CD4-positive, alpha-beta memory T cell (primary cell): ENCODE measurements at regions of chr3 and their contacts with region 1.

Region 1: DNA sequence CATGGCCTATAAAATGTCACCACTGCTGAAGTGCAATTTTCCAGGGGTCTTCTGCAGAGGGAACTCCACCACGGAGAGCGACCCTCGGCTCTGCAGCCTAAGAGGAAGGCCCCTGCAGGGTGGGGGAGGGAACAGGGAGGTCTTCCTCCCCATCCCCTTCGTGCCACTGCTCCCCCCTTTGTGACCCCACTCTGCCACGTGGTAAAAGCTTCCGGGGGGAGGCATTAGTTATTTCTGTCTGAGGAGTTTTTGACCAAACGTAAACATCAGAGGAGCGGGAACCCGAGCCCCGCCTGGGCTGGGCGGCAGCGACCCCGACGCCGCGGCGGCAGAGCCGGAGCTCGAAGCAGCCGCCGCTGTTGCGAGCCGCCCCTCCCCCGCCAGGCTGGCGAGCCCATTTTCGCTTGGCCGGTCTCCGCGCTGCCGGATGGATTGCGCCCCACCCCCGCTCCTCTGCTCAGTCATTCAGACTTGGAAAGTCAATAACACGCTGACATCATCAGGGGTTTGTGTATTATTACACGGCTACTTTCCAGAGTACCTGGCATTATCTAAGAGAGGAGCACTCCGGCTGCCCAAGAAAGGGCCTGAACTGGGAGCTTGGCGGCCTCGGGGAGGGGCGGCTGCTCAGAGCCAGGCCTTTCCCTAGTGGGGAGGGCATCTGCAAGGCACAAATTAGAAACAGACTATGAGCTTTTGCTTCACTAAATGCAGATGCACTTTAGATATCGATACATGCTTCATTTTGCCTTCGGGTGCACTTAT is 162.5 kb upstream of the TBL1XR1 start:
- DNase-seq: peak; percentile 95 to 96 (median 96)
- H3K4me3 ChIP-seq: peak overlapping the region; percentile 54 to 65
- H3K4me3 Mint-ChIP-seq: peak overlapping the region; percentile 88 to 98 (median 94)
- H3K27ac ChIP-seq: peak overlapping the region; percentile 96
- H3K27ac Mint-ChIP-seq: peak overlapping the region; percentile 96 to 100 (median 99)
- H3K4me1 ChIP-seq: peaks cover 50% of the 10 kb centered on the region
- H3K4me1 Mint-ChIP-seq: peaks cover 33 to 63% (median 49%) of the 10 kb centered on the region in 4 donors
- H3K27me3 ChIP-seq: no peaks in the 10 kb centered on the region
- H3K27me3 Mint-ChIP-seq: peaks cover 1 to 7% of the 10 kb centered on the region in 2 donors

Region 2: GRCh38 chr3:177119829-177120228 is 239.9 kb before region 1 on chr3:
- CTCF ChIA-PET with region 1: no interaction called
- POLR2A ChIA-PET with region 1: interaction called, 3 read pairs
- intact Hi-C with region 1: loop called (anchors 2 kb)
- DNase-seq: no peak
- H3K4me3 ChIP-seq: no peak overlapping the region
- H3K4me3 Mint-ChIP-seq: peak overlapping the region in 1 of 8 donors; percentile 22
- H3K27ac ChIP-seq: no peak overlapping the region
- H3K27ac Mint-ChIP-seq: peak overlapping the region in 4 of 7 donors; percentile 7 to 49 (median 23)
- H3K4me1 ChIP-seq: peaks cover 44% of the 10 kb centered on the region
- H3K4me1 Mint-ChIP-seq: peaks cover 61 to 92% (median 79%) of the 10 kb centered on the region in 4 donors
- H3K27me3 ChIP-seq: no peaks in the 10 kb centered on the region
- H3K27me3 Mint-ChIP-seq: no peaks in the 10 kb centered on the region

Region 3: DNA sequence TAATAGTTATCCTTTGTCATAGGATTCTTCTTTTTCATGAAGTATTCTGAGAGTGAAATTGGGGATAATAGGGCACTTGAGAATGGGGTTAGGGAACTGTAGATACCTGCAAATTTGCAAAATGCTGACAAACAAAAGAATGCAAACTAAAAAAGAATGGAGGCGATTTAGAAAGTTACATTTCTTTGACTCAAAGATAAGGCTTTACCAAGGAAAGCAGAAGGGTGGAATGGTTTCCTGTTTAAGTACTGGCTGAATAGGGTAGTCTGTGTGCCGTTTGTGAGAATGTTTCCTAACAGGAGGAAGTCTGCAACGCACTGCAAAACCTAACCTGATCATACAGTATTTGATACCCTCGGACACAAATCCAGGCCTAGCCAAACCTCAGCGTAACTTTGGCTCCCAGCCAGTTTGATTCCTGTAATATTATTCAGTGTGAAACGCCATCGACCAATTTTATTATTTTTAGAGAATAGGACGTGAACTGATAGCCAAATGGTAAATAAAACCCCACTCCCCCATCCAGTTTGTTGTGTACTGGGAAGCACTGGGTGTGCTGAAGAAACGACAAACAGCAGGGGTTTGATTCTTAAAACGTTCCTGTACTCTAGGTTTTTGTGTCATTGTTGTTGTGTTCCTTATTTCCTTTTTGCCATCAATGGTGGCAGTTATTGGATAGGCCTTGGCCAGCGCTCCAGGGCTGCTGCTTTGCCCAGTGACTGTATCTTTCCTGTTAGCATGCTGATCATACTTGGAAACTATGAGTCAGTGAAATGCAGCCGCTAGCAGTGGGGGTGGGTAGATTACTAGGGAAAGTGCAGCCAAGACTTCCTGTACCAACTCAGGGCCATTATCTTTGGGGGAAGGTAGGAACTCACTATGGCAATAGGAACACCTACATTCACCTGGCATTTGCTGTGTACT is 14.5 kb before region 1 on chr3:
- CTCF ChIA-PET with region 1: no interaction called
- POLR2A ChIA-PET with region 1: interaction called, 8 read pairs
- intact Hi-C with region 1: loop called (anchors 1 kb)
- DNase-seq: peak in 4 of 5 donors; percentile 8 to 82 (median 24)
- H3K4me3 ChIP-seq: no peak overlapping the region
- H3K4me3 Mint-ChIP-seq: peak overlapping the region in 6 of 8 donors; percentile 36 to 68 (median 56)
- H3K27ac ChIP-seq: no peak overlapping the region
- H3K27ac Mint-ChIP-seq: peak overlapping the region in 6 of 7 donors; percentile 25 to 89 (median 55)
- H3K4me1 ChIP-seq: peaks cover 19% of the 10 kb centered on the region
- H3K4me1 Mint-ChIP-seq: peaks cover 15 to 25% (median 17%) of the 10 kb centered on the region in 4 donors
- H3K27me3 ChIP-seq: no peaks in the 10 kb centered on the region
- H3K27me3 Mint-ChIP-seq: no peaks in the 10 kb centered on the region

Region 4: GRCh38 chr3:177448987-177449975 is 89.5 kb after region 1 on chr3:
- CTCF ChIA-PET with region 1: interaction called, 4 read pairs
- POLR2A ChIA-PET with region 1: interaction called, 19 read pairs
- intact Hi-C with region 1: loop called (anchors 1 kb)
- DNase-seq: peak; percentile 19 to 49 (median 23)
- H3K4me3 ChIP-seq: peak overlapping the region in 1 of 2 donors; percentile 6
- H3K4me3 Mint-ChIP-seq: peak overlapping the region; percentile 26 to 84 (median 70)
- H3K27ac ChIP-seq: no peak overlapping the region
- H3K27ac Mint-ChIP-seq: peak overlapping the region; percentile 67 to 93 (median 84)
- H3K4me1 ChIP-seq: peaks cover 23% of the 10 kb centered on the region
- H3K4me1 Mint-ChIP-seq: peaks cover 13 to 26% (median 19%) of the 10 kb centered on the region in 4 donors
- H3K27me3 ChIP-seq: no peaks in the 10 kb centered on the region
- H3K27me3 Mint-ChIP-seq: no peaks in the 10 kb centered on the region

Region 5: GRCh38 chr3:177646749-177647148 is 287.0 kb after region 1 on chr3:
- CTCF ChIA-PET with region 1: no interaction called
- POLR2A ChIA-PET with region 1: interaction called, 25 read pairs
- intact Hi-C with region 1: loop called (anchors 10 kb)
- DNase-seq: peak; percentile 26 to 67 (median 38)
- H3K4me3 ChIP-seq: no peak overlapping the region
- H3K4me3 Mint-ChIP-seq: peak overlapping the region in 6 of 8 donors; percentile 37 to 82 (median 59)
- H3K27ac ChIP-seq: no peak overlapping the region
- H3K27ac Mint-ChIP-seq: peak overlapping the region; percentile 70 to 88 (median 80)
- H3K4me1 ChIP-seq: peaks cover 73% of the 10 kb centered on the region
- H3K4me1 Mint-ChIP-seq: peaks cover 55 to 70% (median 63%) of the 10 kb centered on the region in 4 donors
- H3K27me3 ChIP-seq: no peaks in the 10 kb centered on the region
- H3K27me3 Mint-ChIP-seq: no peaks in the 10 kb centered on the region

Region 6: GRCh38 chr3:178155521-178155920 is 795.7 kb after region 1 on chr3:
- CTCF ChIA-PET with region 1: interaction called, 4 read pairs
- POLR2A ChIA-PET with region 1: no interaction called
- intact Hi-C with region 1: loop called (anchors 10 kb)
- DNase-seq: no peak
- H3K4me3 ChIP-seq: no peak overlapping the region
- H3K4me3 Mint-ChIP-seq: no peak overlapping the region
- H3K27ac ChIP-seq: no peak overlapping the region
- H3K27ac Mint-ChIP-seq: no peak overlapping the region
- H3K4me1 ChIP-seq: no peaks in the 10 kb centered on the region
- H3K4me1 Mint-ChIP-seq: peaks cover 0 to 4% (median 0%) of the 10 kb centered on the region in 4 donors
- H3K27me3 ChIP-seq: no peaks in the 10 kb centered on the region
- H3K27me3 Mint-ChIP-seq: peaks cover 1 to 2% of the 10 kb centered on the region in 2 donors